B cell (primary cell): ENCODE measurements at regions of chr20 and their contacts with region 1.

Region 1: DNA sequence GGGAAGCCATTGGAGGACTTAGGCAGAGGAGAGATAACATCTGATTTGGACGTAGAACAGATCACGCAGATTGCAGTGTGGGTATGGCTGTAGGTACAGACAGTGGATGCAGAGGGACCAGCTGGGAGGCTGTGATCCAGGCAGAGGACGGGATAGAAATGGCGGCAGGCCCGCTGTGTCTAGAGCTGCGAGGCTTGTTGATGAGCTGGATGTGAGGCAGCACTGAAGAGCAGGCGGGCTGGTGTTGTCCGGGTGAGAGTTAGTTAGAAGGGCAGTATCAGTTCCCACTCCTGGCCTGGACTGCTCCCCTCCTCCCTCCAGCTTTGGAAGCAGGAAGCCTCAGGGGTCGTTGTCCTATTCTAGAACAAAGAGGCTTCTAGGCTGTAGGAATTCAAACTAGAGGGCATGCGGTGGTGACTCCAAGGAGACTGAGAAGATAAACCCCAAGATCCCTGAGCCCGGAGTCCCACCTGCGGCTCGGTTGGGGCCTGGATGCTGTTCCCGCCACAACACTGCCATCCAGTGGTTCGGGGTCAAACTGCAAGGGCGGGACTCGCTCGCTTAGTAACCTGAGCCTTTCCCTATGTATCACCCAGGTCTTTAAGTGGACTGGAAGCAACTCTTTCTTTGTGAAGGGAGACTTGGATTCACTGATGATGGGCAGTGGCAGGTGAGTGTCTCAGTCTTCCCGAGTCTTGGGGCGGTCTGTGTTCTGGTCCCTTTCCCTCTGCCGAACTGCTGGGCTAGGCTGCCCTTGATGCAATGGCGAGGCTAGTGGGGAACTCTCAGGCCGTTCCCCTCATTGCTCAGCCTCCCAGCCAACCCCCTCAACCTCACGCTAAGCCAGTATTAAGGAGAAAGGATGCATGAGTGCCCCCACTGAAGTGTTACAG is 11.2 kb downstream of the TLDC2 start:
- DNase-seq: peak; percentile 87
- ATAC-seq: peak; percentile 98
- H3K4me3 ChIP-seq: no peak overlapping the region
- H3K4me3 Mint-ChIP-seq: peak overlapping the region; percentile 61
- H3K27ac ChIP-seq: no peak overlapping the region
- H3K27ac Mint-ChIP-seq: no peak overlapping the region
- H3K4me1 ChIP-seq: peaks cover 4 to 8% of the 10 kb centered on the region in 2 donors
- H3K4me1 Mint-ChIP-seq: peaks cover 8% of the 10 kb centered on the region
- H3K27me3 ChIP-seq: no peaks in the 10 kb centered on the region
- H3K27me3 Mint-ChIP-seq: no peaks in the 10 kb centered on the region
- CTCF ChIP-seq: peak; percentile 97

Region 2: DNA sequence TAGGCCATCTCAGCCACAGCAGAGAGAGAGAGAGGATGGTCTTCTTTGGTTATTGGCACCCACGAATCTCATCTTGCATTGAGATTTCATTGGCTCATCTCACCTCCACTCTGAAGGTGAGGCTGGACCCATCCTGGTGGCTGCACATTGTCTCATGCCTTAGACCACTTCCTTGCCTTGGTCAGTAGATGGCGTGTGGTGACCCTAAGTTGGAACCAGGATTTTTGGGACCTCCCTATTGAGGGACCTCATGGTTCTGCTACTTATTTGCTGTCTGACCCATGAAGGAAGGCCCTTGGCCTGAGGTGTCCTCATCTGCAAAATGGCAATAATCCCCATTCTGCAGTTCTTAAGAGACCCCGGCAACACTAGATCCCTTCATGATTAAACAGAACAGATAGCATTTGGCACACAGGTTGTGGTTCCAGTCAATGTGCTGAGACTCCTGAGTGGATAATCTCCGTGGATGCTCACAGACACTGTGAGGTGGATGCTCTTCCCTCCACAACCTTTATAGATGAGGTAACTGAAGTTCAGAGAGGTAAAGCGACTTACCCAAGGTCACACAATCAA is 672.3 kb before region 1 on chr20:
- CTCF ChIA-PET with region 1: interaction called, 3 read pairs
- POLR2A ChIA-PET with region 1: no interaction called
- intact Hi-C with region 1: loop called (anchors 1 kb)
- DNase-seq: peak; percentile 51
- ATAC-seq: peak; percentile 56
- H3K4me3 ChIP-seq: no peak overlapping the region
- H3K4me3 Mint-ChIP-seq: no peak overlapping the region
- H3K27ac ChIP-seq: no peak overlapping the region
- H3K27ac Mint-ChIP-seq: no peak overlapping the region
- H3K4me1 ChIP-seq: no peaks in the 10 kb centered on the region
- H3K4me1 Mint-ChIP-seq: no peaks in the 10 kb centered on the region
- H3K27me3 ChIP-seq: no peaks in the 10 kb centered on the region
- H3K27me3 Mint-ChIP-seq: peaks cover 18% of the 10 kb centered on the region
- CTCF ChIP-seq: peak; percentile 56

Region 3: DNA sequence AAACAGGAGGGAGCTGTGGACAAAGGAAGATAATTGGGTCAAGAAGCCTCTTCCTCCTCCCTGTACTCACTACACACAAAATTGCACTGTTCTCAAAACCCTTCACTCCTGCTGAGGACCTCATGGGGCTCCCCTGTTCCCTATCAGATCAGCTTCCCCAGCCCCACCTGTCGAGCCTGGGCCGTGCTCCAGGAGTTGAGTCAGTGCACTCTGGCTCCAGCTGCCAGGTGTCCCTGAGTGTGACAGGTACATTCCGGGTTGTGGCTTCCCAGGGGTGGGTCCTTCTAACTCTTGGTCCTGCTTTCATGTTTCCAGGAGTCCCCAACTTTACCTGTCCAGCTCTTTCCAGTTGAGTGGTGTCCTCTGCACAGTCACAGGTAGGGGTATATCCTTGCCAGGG is 273.1 kb before region 1 on chr20:
- CTCF ChIA-PET with region 1: interaction called, 53 read pairs
- POLR2A ChIA-PET with region 1: no interaction called
- intact Hi-C with region 1: loop called (anchors 1 kb)
- DNase-seq: no peak
- ATAC-seq: no peak
- H3K4me3 ChIP-seq: no peak overlapping the region
- H3K4me3 Mint-ChIP-seq: no peak overlapping the region
- H3K27ac ChIP-seq: no peak overlapping the region
- H3K27ac Mint-ChIP-seq: no peak overlapping the region
- H3K4me1 ChIP-seq: no peaks in the 10 kb centered on the region
- H3K4me1 Mint-ChIP-seq: no peaks in the 10 kb centered on the region
- H3K27me3 ChIP-seq: no peaks in the 10 kb centered on the region
- H3K27me3 Mint-ChIP-seq: no peaks in the 10 kb centered on the region
- CTCF ChIP-seq: no peak

Region 4: DNA sequence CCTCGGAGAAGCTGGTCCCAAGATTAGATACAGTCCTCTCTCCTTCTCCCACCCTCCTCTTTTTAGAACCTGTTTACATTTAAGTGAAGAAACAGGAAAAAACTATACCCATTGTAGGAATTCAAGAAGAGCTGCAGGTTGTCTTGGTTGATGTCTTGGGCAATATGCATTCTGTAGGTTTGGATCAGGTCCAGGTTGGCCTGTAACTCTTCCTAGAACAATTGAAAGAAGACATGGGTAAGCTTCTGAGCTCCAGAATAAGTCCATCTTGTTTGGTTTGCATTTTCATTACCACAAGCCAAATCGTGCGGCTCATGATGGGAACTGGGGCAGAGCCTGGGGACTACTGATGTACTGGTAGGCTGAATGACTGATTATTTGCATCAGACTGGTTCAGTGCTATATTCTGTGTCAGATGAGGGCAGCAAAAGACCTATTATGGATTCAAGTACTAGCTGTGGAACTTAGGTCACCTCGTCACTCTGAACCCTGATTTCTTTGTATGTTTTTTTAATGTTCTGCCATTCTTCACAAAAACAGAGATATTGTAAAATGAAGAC is 220.8 kb before region 1 on chr20:
- CTCF ChIA-PET with region 1: interaction called, 16 read pairs
- POLR2A ChIA-PET with region 1: no interaction called
- intact Hi-C with region 1: loop called (anchors 5 kb)
- DNase-seq: peak; percentile 41
- ATAC-seq: no peak
- H3K4me3 ChIP-seq: no peak overlapping the region
- H3K4me3 Mint-ChIP-seq: no peak overlapping the region
- H3K27ac ChIP-seq: no peak overlapping the region
- H3K27ac Mint-ChIP-seq: no peak overlapping the region
- H3K4me1 ChIP-seq: no peaks in the 10 kb centered on the region
- H3K4me1 Mint-ChIP-seq: no peaks in the 10 kb centered on the region
- H3K27me3 ChIP-seq: no peaks in the 10 kb centered on the region
- H3K27me3 Mint-ChIP-seq: no peaks in the 10 kb centered on the region
- CTCF ChIP-seq: peak; percentile 30

Region 5: DNA sequence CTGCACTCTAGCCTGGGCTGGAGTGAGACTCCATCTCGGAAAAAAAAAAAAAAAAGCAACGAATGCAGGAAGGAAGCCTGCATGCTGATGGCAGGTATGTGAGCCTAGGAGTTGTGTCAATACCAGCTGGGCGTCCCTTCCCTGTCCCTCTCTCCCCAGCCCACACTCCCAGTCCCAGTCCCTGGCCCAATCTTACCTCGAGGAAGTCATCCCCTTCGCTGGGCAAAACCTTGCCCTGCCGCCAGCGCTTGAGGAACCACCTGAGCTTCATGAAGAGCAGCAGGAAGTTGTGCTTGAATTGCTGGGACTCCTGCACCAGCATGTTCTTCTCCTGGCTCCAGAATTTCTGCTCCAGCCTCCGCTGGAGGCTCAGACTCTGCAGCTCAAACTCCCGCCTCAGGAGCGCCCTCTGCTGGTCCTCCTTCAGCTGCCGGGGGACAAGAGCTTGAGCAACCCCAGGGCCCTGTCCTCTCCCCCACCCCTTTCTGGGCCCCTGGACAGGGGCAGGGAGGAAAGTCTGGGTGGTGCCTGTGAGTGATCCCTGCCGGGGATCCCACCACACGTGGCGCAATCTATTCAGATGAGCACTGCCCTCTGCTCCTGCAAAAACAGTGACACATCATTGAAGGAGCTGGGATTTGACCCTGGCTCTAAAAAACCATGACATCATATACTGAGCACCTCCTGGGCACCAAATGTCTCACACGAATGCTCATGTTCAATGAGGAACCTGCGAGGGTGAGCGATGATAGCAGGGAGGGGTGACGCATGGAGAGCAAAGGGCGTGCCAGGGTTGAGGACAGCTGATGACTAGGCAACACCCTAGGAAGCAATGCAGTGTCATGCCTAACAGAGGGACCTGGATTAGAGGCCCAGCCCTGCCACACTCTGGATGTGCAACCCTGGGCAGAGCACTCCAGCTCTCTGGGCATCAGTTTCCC is 78.5 kb before region 1 on chr20:
- CTCF ChIA-PET with region 1: interaction called, 21 read pairs
- POLR2A ChIA-PET with region 1: no interaction called
- intact Hi-C with region 1: loop called (anchors 1 kb)
- DNase-seq: peak; percentile 78
- ATAC-seq: peak; percentile 71
- H3K4me3 ChIP-seq: no peak overlapping the region
- H3K4me3 Mint-ChIP-seq: no peak overlapping the region
- H3K27ac ChIP-seq: no peak overlapping the region
- H3K27ac Mint-ChIP-seq: peak overlapping the region; percentile 50
- H3K4me1 ChIP-seq: peaks cover 0 to 9% of the 10 kb centered on the region in 2 donors
- H3K4me1 Mint-ChIP-seq: peaks cover 3% of the 10 kb centered on the region
- H3K27me3 ChIP-seq: no peaks in the 10 kb centered on the region
- H3K27me3 Mint-ChIP-seq: no peaks in the 10 kb centered on the region
- CTCF ChIP-seq: peak; percentile 83

Region 6: GRCh38 chr20:37075932-37076685 is 189.0 kb after region 1 on chr20:
- CTCF ChIA-PET with region 1: no interaction called
- POLR2A ChIA-PET with region 1: no interaction called
- intact Hi-C with region 1: no loop called
- DNase-seq: no peak
- ATAC-seq: no peak
- H3K4me3 ChIP-seq: no peak overlapping the region
- H3K4me3 Mint-ChIP-seq: no peak overlapping the region
- H3K27ac ChIP-seq: no peak overlapping the region
- H3K27ac Mint-ChIP-seq: no peak overlapping the region
- H3K4me1 ChIP-seq: peaks cover 0 to 17% of the 10 kb centered on the region in 2 donors
- H3K4me1 Mint-ChIP-seq: peaks cover 23% of the 10 kb centered on the region
- H3K27me3 ChIP-seq: no peaks in the 10 kb centered on the region
- H3K27me3 Mint-ChIP-seq: no peaks in the 10 kb centered on the region
- CTCF ChIP-seq: no peak

Region 7: GRCh38 chr20:37276494-37277252 is 389.6 kb after region 1 on chr20:
- CTCF ChIA-PET with region 1: no interaction called
- POLR2A ChIA-PET with region 1: no interaction called
- intact Hi-C with region 1: no loop called
- DNase-seq: peak; percentile 68
- ATAC-seq: peak; percentile 61
- H3K4me3 ChIP-seq: peak overlapping the region in 1 of 5 experiments; percentile 1
- H3K4me3 Mint-ChIP-seq: peak overlapping the region; percentile 73
- H3K27ac ChIP-seq: peak overlapping the region; percentile 60 to 65
- H3K27ac Mint-ChIP-seq: peak overlapping the region; percentile 92
- H3K4me1 ChIP-seq: peaks cover 45 to 48% of the 10 kb centered on the region in 2 donors
- H3K4me1 Mint-ChIP-seq: peaks cover 37% of the 10 kb centered on the region
- H3K27me3 ChIP-seq: no peaks in the 10 kb centered on the region
- H3K27me3 Mint-ChIP-seq: no peaks in the 10 kb centered on the region
- CTCF ChIP-seq: no peak